Endothelial cell of umbilical vein (primary cell): ENCODE measurements at regions of chr1 and their contacts with region 1.

Region 1: GRCh38 chr1:246355411-246356230 is 151.5 kb downstream of the SMYD3 start:
- DNase-seq: peak; percentile 44
- H3K4me3 ChIP-seq: no peak overlapping the region
- H3K27ac ChIP-seq: peak overlapping the region; percentile 83
- H3K4me1 ChIP-seq: peaks cover 24% of the 10 kb centered on the region
- H3K27me3 ChIP-seq: no peaks in the 10 kb centered on the region
- CTCF ChIP-seq: peak in 1 of 2 donors; percentile 18
- POLR2A ChIP-seq: no peak

Region 2: GRCh38 chr1:246295968-246296367 is 59.7 kb before region 1 on chr1:
- CTCF ChIA-PET with region 1: interaction called, 4 read pairs
- POLR2A ChIA-PET with region 1: no interaction called
- dilution Hi-C with region 1: no loop called
- intact Hi-C with region 1: loop called (anchors 1 kb)
- DNase-seq: peak; percentile 53
- H3K4me3 ChIP-seq: no peak overlapping the region
- H3K27ac ChIP-seq: peak overlapping the region; percentile 78
- H3K4me1 ChIP-seq: peaks cover 43% of the 10 kb centered on the region
- H3K27me3 ChIP-seq: no peaks in the 10 kb centered on the region
- CTCF ChIP-seq: no peak
- POLR2A ChIP-seq: no peak

Region 3: GRCh38 chr1:246320286-246320685 is 35.3 kb before region 1 on chr1:
- CTCF ChIA-PET with region 1: interaction called, 3 read pairs
- POLR2A ChIA-PET with region 1: no interaction called
- dilution Hi-C with region 1: no loop called
- intact Hi-C with region 1: loop called (anchors 2 kb)
- DNase-seq: peak; percentile 71
- H3K4me3 ChIP-seq: no peak overlapping the region
- H3K27ac ChIP-seq: peak overlapping the region; percentile 2
- H3K4me1 ChIP-seq: peaks cover 11% of the 10 kb centered on the region
- H3K27me3 ChIP-seq: no peaks in the 10 kb centered on the region
- CTCF ChIP-seq: no peak
- POLR2A ChIP-seq: no peak

Region 4: DNA sequence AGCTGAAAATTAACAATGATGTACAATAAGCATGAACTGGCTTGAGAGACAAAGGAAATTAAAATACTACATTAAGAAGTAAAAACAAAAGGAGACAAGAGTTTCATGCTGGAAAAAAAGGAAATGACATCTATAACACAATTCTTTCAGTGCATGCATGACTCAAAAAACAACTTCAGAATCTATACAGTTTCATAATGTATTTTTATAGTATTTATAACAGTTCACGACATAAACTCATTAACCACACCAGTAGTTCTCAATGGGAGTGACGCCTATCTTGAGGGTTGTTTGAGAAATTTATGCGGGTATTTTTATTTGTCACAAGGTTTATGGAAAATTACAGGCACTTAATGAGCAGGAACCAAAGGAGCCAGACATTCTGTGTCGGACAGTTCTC is 17.1 kb before region 1 on chr1:
- CTCF ChIA-PET with region 1: no interaction called
- POLR2A ChIA-PET with region 1: no interaction called
- dilution Hi-C with region 1: no loop called
- intact Hi-C with region 1: loop called (anchors 2 kb)
- DNase-seq: no peak
- H3K4me3 ChIP-seq: no peak overlapping the region
- H3K27ac ChIP-seq: peak overlapping the region; percentile 10
- H3K4me1 ChIP-seq: peaks cover 8% of the 10 kb centered on the region
- H3K27me3 ChIP-seq: no peaks in the 10 kb centered on the region
- CTCF ChIP-seq: no peak
- POLR2A ChIP-seq: no peak